Activated CD4-positive, alpha-beta memory T cell treated with anti-CD3 and anti-CD28 coated beads for 36 hours (primary cell): ENCODE measurements at regions of chr14 and their contacts with region 1.

Region 1: DNA sequence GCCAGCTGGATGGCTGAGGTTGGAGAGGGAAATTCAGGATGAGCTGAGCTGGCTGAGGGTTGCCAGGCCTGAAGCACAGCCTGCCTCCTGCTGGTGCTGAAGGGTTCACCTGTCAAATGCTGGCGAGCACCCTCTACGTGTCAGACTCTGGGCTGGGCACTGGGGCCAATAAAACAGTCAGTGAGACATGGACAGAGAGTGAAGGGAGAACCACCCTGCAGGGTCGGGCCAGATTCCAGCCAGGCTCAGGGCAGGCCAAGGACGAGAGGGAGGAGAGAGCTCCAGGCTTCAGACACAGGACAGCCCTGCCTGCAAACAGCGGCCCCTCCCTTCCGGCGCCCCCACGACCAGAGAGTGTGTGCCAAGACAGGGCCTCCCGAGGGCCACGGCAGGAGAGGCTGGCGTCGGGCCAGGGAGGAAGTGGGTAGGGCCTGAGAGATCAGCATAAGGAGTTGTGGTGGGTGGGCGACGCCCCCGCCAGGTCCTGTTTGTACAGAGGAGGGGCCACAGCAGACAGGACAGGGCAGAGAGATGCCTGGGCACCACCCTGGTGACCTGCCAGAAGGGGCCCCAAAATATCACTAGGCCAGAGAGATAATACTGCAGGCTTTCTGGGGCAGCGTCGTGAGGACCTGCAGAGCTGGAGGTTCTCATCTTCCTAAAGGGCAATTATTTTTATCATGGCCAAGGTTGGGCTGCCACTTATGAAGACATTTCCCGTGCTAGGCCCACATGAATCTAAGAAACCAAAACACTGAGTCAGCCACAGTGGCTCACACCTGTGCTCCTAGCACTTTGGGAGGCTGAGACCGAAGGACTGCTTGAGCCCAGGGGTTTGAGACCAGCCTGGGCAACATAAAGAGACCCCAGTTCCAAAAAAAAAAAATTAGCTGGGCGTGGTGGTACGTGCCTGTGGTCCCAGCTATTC is 73.1 kb upstream of the GPR68 start:
- DNase-seq: peak; percentile 92
- H3K4me3 Mint-ChIP-seq: peak overlapping the region; percentile 60
- H3K27ac Mint-ChIP-seq: peak overlapping the region; percentile 94
- H3K4me1 Mint-ChIP-seq: peaks cover 78% of the 10 kb centered on the region
- H3K27me3 Mint-ChIP-seq: no peaks in the 10 kb centered on the region

Region 2: GRCh38 chr14:91252871-91253794 is 64.5 kb before region 1 on chr14:
- CTCF ChIA-PET with region 1: no interaction called
- POLR2A ChIA-PET with region 1: no interaction called
- intact Hi-C with region 1: no loop called
- DNase-seq: peak; percentile 59
- H3K4me3 Mint-ChIP-seq: peak overlapping the region; percentile 59
- H3K27ac Mint-ChIP-seq: peak overlapping the region; percentile 92
- H3K4me1 Mint-ChIP-seq: peaks cover 78% of the 10 kb centered on the region
- H3K27me3 Mint-ChIP-seq: no peaks in the 10 kb centered on the region

Region 3: GRCh38 chr14:91303091-91303923 is 14.3 kb before region 1 on chr14:
- CTCF ChIA-PET with region 1: interaction called, 4 read pairs
- POLR2A ChIA-PET with region 1: interaction called, 3 read pairs
- intact Hi-C with region 1: loop called (anchors 1 kb)
- DNase-seq: peak; percentile 94
- H3K4me3 Mint-ChIP-seq: peak overlapping the region; percentile 54
- H3K27ac Mint-ChIP-seq: peak overlapping the region; percentile 95
- H3K4me1 Mint-ChIP-seq: peaks cover 56% of the 10 kb centered on the region
- H3K27me3 Mint-ChIP-seq: no peaks in the 10 kb centered on the region